PC-9 (cell line): ENCODE measurements at regions of chr1 and their contacts with region 1.

Region 1: GRCh38 chr1:77857552-77857951 is 30.9 kb upstream of the NEXN start:
- DNase-seq: no peak
- H3K4me3 ChIP-seq: no peak overlapping the region
- H3K27ac ChIP-seq: no peak overlapping the region
- H3K4me1 ChIP-seq: no peaks in the 10 kb centered on the region
- H3K27me3 ChIP-seq: no peaks in the 10 kb centered on the region
- CTCF ChIP-seq: no peak

Region 2: DNA sequence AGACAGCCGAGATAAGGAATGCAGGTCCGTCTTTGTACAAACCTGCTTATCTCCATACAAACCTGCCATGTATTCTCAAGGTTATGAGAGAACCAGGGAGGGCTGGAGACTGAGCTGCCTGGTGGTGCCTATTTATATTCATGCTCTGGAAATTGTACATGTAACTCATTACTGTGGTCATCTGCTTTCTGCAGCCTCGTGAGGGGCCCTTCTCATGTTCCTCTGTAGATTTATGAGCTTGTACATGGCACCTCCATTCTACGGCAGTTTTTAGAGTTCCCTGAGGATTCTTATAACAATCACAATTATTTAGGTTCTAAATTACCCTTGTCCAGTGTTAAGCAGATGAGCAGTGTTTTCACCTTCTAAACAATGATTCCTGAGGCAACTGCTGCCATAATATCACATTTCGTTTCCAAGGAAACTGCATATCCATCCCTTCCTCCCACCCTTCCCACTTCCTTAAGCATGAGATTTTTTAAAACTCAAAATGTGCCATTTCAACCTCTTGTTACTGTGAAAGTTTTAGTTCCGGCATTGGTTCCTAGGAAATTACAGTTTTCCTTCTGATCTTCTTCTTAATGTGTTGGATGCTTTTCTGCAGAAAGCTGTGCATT is 1670.9 kb before region 1 on chr1:
- CTCF ChIA-PET with region 1: interaction called, 13 read pairs
- POLR2A ChIA-PET with region 1: no interaction called
- intact Hi-C with region 1: no loop called
- DNase-seq: no peak
- H3K4me3 ChIP-seq: no peak overlapping the region
- H3K27ac ChIP-seq: no peak overlapping the region
- H3K4me1 ChIP-seq: no peaks in the 10 kb centered on the region
- H3K27me3 ChIP-seq: no peaks in the 10 kb centered on the region
- CTCF ChIP-seq: no peak

Region 3: GRCh38 chr1:77739235-77739634 is 118.3 kb before region 1 on chr1:
- CTCF ChIA-PET with region 1: no interaction called
- POLR2A ChIA-PET with region 1: interaction called, 18 read pairs
- intact Hi-C with region 1: no loop called
- DNase-seq: no peak
- H3K4me3 ChIP-seq: no peak overlapping the region
- H3K27ac ChIP-seq: no peak overlapping the region
- H3K4me1 ChIP-seq: no peaks in the 10 kb centered on the region
- H3K27me3 ChIP-seq: no peaks in the 10 kb centered on the region
- CTCF ChIP-seq: no peak